Heart left ventricle (tissue), 16 donors: ENCODE measurements at regions of chr1 and their contacts with region 1.

Region 1: DNA sequence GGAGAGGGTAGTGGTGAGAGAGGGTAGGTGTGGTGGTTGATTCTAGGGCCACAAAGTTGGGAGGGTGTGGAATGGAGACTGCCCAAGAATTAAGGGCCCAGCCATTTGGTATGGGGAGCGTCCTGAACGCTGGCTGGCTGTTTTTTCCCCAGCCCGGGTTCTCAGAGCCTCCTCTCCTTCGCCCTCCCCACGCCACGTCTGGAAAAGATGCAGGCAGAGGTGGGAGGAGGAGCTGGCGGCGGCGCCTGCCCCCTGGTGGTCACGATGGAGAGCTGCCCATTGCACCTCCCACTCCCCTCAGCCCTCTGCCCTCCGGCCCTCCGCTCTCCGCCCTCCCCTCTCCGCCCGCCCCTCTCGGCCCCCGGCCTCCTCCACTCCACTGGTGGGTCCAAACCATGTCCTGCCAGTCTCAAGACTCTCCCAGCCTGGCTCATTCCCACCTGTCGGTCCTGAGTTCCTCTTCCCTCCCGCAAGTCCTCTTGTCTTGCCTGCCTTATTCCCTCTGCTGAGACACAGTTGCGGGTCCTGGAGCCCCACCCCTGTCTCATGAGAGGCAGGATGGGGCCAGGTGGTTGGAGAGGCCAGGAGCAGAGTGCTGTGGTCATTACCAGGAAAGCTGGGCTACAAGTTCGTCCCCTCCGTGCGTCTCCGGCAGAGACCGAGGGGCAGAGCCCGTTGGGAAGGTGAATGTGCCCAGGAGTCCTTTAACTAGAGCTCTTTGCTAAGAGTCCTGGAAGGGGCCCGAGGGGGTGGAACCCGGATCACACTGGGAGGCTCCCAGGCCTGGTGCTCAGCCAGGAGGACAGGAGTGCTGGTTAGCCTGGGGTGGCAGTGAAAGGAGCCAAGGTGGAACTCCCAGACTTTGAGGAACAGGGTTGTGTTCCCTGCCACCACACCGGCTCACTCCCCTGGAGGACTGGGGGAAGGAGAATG is 22.6 kb downstream of the ETNK2 start:
- DNase-seq: peak; percentile 70 to 87 (median 77)
- ATAC-seq: peak; percentile 62 to 89 (median 84)
- H3K4me3 ChIP-seq: peak overlapping the region in 5 of 12 donors; percentile 3 to 25 (median 18)
- H3K27ac ChIP-seq: peak overlapping the region in 3 of 12 donors; percentile 25 to 80 (median 38)
- H3K4me1 ChIP-seq: peaks cover 4 to 48% (median 23%) of the 10 kb centered on the region in 12 donors
- H3K27me3 ChIP-seq: no peaks in the 10 kb centered on the region
- CTCF ChIP-seq: peak; percentile 86 to 95 (median 92)
- POLR2A ChIP-seq: no peak

Region 2: DNA sequence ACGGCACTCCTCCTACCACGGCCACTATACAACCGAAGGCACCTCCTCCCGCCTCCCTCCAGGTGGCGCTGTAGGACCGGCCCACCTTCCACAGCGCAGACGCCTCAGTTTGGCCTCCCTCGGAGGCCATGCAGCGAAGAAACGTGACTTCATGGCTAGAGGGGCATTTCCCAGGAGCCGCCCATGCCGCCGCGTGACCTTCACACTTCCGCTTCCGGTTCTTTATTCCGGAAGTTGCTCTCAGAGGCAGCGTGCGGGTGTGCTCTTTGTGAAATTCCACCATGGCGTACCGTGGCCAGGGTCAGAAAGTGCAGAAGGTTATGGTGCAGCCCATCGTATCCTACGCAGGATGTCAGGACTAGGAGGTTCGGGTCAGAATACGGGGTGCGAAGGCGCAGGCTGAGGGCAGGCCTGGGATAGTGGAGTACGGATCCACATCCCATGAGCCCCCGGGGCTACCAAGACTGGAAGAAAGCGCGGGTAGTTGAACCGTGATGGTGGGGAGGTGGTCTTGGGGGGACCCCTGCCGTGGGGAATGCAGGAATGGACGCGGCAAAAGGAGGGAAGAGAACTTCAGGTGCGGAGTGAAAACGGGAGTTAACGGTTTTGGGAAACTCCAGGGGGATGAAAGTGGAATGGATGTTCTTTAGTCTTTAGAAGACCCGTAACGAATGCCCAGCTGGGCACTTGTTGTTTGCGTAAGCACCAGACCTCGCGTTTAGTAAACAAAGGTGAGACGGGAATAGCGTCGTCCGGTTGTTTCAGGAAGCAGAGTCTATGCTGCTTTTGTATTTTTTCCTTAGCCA is 267.6 kb before region 1 on chr1 and contains the start of gene SNRPE:
- intact Hi-C with region 1: loop called in 5 of 10 experiments (anchors 1 to 2 kb)
- DNase-seq: peak; percentile 96 to 97 (median 96)
- ATAC-seq: peak; percentile 98 to 99 (median 98)
- H3K4me3 ChIP-seq: peak within 1 kb of the TSS; percentile 63 to 96 (median 81)
- H3K27ac ChIP-seq: peak within 1 kb of the TSS in 10 of 12 donors; percentile 46 to 76 (median 66)
- H3K4me1 ChIP-seq: peaks cover 0 to 25% (median 16%) of the 10 kb centered on the region in 12 donors
- H3K27me3 ChIP-seq: no peaks in the 10 kb centered on the region
- CTCF ChIP-seq: peak; percentile 85 to 99 (median 96)
- POLR2A ChIP-seq: peak in 1 of 2 donors; percentile 27
- total RNA-seq, gene SNRPE: 17.7 to 66.4 (median 48.6) TPM

Region 3: DNA sequence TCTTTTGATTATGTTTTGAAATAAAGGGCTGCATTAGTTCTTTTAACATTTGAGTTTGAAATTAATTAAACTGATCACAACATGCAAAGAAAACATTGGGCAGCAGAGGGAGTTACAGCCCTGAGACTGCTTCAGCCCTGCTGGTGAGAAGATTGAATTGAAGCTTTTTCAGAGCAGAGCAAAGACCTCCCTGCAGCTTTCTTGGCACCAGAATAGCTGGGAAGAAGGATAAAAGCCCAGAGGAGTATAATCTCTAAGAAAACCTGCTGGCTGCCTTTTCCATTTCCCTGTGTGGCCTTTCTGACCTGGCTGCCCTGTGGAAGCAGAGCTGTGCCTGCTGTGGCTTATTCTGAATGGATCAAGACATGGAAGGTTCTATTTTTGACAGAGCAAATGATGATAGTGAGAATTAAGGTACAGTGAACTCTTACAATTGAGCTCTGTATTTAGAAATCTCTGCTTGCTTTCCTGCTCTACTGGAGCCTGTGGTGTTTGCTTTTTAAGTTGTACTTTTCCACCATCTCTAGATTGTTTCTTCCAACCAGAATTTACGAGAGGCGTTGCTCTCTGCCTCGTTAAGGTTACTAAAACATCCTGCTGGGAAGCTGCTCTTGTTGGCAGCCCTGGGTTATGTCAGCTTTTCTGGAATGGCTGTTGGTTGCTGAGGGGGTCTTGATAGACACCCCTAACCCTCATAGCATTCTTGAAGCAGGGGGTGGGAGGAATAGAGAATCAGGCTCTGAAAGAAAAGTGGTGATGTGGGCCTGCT is 257.9 kb before region 1 on chr1:
- intact Hi-C with region 1: loop called in 8 of 10 experiments (anchors 1 to 2 kb)
- DNase-seq: peak in 2 of 5 donors; percentile 37 to 57
- ATAC-seq: peak in 3 of 4 donors; percentile 79 to 89 (median 82)
- H3K4me3 ChIP-seq: no peak overlapping the region
- H3K27ac ChIP-seq: peak overlapping the region in 5 of 12 donors; percentile 18 to 61 (median 33)
- H3K4me1 ChIP-seq: peaks cover 0 to 18% (median 9%) of the 10 kb centered on the region in 12 donors
- H3K27me3 ChIP-seq: no peaks in the 10 kb centered on the region
- CTCF ChIP-seq: peak; percentile 62 to 89 (median 79)
- POLR2A ChIP-seq: no peak

Region 4: GRCh38 chr1:203968728-203969127 is 160.5 kb before region 1 on chr1:
- intact Hi-C with region 1: loop called in 1 of 10 experiments (anchors 10 kb)
- DNase-seq: peak in 4 of 5 donors; percentile 36 to 51 (median 46)
- ATAC-seq: peak in 3 of 4 donors; percentile 47 to 81 (median 59)
- H3K4me3 ChIP-seq: no peak overlapping the region
- H3K27ac ChIP-seq: no peak overlapping the region
- H3K4me1 ChIP-seq: peaks cover 0 to 9% (median 0%) of the 10 kb centered on the region in 12 donors
- H3K27me3 ChIP-seq: no peaks in the 10 kb centered on the region
- CTCF ChIP-seq: no peak
- POLR2A ChIP-seq: no peak

Region 5: DNA sequence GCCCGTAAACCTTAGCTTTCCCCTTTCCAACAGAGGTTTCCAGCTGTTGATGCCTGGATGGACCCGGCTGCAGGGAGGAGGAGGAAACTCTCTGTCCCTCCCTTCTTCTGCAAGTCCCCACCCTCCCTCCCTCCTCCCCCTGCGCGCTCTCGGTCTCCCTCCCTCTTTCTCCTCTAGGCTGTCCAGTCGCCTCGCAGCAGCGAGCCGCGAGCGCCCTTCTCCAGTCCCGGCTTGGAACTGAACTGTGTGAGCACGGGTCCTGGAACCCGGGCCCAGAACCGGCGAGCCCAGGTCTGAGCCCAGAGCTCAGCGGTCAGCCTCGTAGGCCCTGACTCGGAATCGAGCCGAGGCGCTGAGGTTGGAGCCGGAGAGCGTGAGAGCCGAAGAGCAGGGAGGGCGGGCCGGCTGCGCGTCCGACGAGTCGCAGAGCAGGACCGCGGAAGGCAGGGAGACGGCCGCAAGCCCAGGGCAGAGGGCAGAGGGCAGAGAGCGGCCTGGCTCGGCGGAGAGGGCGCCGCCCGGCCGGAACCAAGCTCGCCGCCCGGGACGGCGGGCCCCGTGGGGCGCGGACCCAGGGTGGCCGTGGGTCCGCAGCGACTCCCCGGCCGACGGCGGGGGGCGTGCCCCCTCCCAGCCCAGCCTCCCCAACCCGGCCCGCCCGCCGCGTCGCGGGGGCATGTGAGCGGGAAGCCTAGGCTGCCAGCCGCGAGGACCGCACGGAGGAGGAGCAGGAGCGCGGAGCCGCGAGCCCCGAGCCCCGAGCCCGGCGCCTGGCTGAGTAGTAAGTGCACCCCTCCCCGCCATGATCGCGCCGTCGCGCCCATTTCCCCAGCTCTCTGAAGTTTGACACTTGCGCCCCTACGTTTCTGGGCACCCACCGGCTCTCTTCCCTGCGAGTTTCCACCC is 56.0 kb before region 1 on chr1 and contains the start of gene SOX13:
- intact Hi-C with region 1: loop called in 9 of 10 experiments (anchors 1 to 5 kb)
- DNase-seq: peak; percentile 88 to 92 (median 90)
- ATAC-seq: peak; percentile 85 to 90 (median 86)
- H3K4me3 ChIP-seq: peak within 1 kb of the TSS; percentile 68 to 93 (median 82)
- H3K27ac ChIP-seq: peak within 1 kb of the TSS; percentile 77 to 95 (median 90)
- H3K4me1 ChIP-seq: peaks cover 0 to 53% (median 23%) of the 10 kb centered on the region in 12 donors
- H3K27me3 ChIP-seq: peaks cover 0 to 49% (median 0%) of the 10 kb centered on the region in 9 donors
- CTCF ChIP-seq: peak in 6 of 12 donors; percentile 13 to 43 (median 32)
- POLR2A ChIP-seq: peak in 1 of 2 donors; percentile 86
- total RNA-seq, gene SOX13: 8.8 to 16.0 (median 13.0) TPM

Region 6: DNA sequence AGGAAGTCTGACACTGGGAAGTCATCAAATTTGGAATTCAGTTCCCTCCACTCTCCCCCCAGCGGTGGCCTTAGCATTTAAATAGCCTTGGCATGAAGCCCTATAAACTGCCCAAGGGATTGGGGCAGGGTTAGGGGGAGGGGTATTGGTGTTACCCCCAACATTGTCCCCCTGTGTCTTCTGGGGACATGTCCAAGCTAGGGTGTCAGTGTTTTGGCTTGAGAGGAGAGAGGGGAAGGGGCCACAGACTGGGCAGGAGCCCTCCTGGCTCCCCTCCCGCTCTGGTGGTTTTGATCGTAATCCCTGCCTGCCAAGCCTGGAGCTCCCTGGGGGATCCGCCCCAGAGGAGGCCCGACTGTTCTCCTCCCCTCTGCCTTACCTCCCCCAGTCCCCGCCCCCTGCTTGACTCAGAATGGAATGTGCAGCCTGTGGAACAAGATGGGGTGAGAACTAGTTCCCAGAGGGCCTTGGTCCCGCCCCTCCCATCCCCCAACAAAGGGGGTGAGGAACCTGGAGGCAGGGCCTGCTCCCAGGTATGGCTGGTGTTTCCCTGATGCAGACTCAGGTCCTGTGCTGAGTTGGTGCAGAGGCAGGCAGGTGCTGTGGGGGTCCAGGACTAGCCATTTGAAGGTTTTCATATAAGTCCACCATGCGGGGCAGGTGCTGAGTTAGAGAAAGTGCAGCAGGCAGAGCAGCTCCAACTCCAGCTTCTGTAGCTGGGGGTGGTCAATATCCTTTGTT is 48.9 kb before region 1 on chr1:
- intact Hi-C with region 1: loop called in 7 of 10 experiments (anchors 2 to 5 kb)
- DNase-seq: peak; percentile 65 to 76 (median 72)
- ATAC-seq: peak; percentile 72 to 75 (median 73)
- H3K4me3 ChIP-seq: peak overlapping the region in 2 of 12 donors; percentile 8
- H3K27ac ChIP-seq: peak overlapping the region in 11 of 12 donors; percentile 6 to 92 (median 49)
- H3K4me1 ChIP-seq: peaks cover 0 to 96% (median 49%) of the 10 kb centered on the region in 12 donors
- H3K27me3 ChIP-seq: peaks cover 0 to 10% (median 0%) of the 10 kb centered on the region in 9 donors
- CTCF ChIP-seq: no peak
- POLR2A ChIP-seq: no peak

Region 7: GRCh38 chr1:204089044-204089751 is 40.0 kb before region 1 on chr1:
- intact Hi-C with region 1: loop called in 2 of 10 experiments (anchors 5 kb)
- DNase-seq: peak in 2 of 5 donors; percentile 37 to 52
- ATAC-seq: peak; percentile 12 to 61 (median 56)
- H3K4me3 ChIP-seq: no peak overlapping the region
- H3K27ac ChIP-seq: peak overlapping the region in 11 of 12 donors; percentile 26 to 92 (median 52)
- H3K4me1 ChIP-seq: peaks cover 6 to 90% (median 45%) of the 10 kb centered on the region in 12 donors
- H3K27me3 ChIP-seq: no peaks in the 10 kb centered on the region
- CTCF ChIP-seq: no peak
- POLR2A ChIP-seq: no peak